ENCODE measurements at regions of chr13 and their contacts with region 1.

Region 1: GRCh38 chr13:30071969-30072817 is 221.8 kb upstream of the UBL3 start:
- DNase-seq: peak; percentile 86 to 93
- H3K4me3 ChIP-seq: no peak overlapping the region
- H3K4me3 Mint-ChIP-seq: peak overlapping the region; percentile 61
- H3K27ac Mint-ChIP-seq: peak overlapping the region; percentile 91
- H3K4me1 ChIP-seq: peaks cover 23% of the 10 kb centered on the region
- H3K4me1 Mint-ChIP-seq: peaks cover 23% of the 10 kb centered on the region
- H3K27me3 ChIP-seq: no peaks in the 10 kb centered on the region
- H3K27me3 Mint-ChIP-seq: no peaks in the 10 kb centered on the region
- CTCF ChIP-seq: no peak

Region 2: GRCh38 chr13:30108692-30109237 is 36.6 kb after region 1 on chr13:
- CTCF ChIA-PET with region 1: interaction called, 7 read pairs
- POLR2A ChIA-PET with region 1: no interaction called
- intact Hi-C with region 1: loop called (anchors 1 kb)
- DNase-seq: peak; percentile 87 to 92
- H3K4me3 ChIP-seq: no peak overlapping the region
- H3K4me3 Mint-ChIP-seq: peak overlapping the region; percentile 3
- H3K27ac Mint-ChIP-seq: peak overlapping the region; percentile 89
- H3K4me1 ChIP-seq: peaks cover 41% of the 10 kb centered on the region
- H3K4me1 Mint-ChIP-seq: peaks cover 34% of the 10 kb centered on the region
- H3K27me3 ChIP-seq: no peaks in the 10 kb centered on the region
- H3K27me3 Mint-ChIP-seq: no peaks in the 10 kb centered on the region
- CTCF ChIP-seq: no peak

Region 3: DNA sequence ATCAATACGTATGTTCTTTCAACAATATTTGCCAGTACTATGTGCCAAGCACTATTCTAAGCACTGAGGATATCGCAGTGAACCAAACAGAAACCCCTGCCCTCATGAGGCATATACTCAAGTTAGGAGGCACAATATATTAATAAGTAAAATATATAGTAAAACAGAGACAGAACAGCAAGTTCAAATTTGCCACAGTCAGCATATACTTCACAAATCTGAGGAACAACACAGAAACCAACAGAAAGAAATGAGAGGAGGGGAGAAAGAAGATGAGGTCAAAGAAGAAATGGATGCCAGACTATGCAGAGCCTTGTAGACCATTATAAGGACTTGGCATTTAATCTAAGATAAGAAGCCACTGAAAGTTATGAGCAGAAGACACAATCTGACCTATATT is 175.2 kb after region 1 on chr13:
- CTCF ChIA-PET with region 1: no interaction called
- POLR2A ChIA-PET with region 1: no interaction called
- intact Hi-C with region 1: no loop called
- DNase-seq: no peak
- H3K4me3 ChIP-seq: no peak overlapping the region
- H3K4me3 Mint-ChIP-seq: no peak overlapping the region
- H3K27ac Mint-ChIP-seq: no peak overlapping the region
- H3K4me1 ChIP-seq: no peaks in the 10 kb centered on the region
- H3K4me1 Mint-ChIP-seq: no peaks in the 10 kb centered on the region
- H3K27me3 ChIP-seq: no peaks in the 10 kb centered on the region
- H3K27me3 Mint-ChIP-seq: no peaks in the 10 kb centered on the region
- CTCF ChIP-seq: no peak